ENCODE measurements at regions of chr5 and their contacts with region 1.

Region 1: GRCh38 chr5:132205385-132206125 is 22.1 kb downstream of the P4HA2 start:
- DNase-seq: no peak
- ATAC-seq: peak; percentile 69
- H3K4me3 ChIP-seq: no peak overlapping the region
- H3K27ac ChIP-seq: no peak overlapping the region
- H3K4me1 ChIP-seq: peaks cover 6% of the 10 kb centered on the region
- H3K27me3 ChIP-seq: no peaks in the 10 kb centered on the region
- CTCF ChIP-seq: no peak
- EP300 ChIP-seq: no peak
- POLR2A ChIP-seq: no peak
- RAD21 ChIP-seq: no peak

Region 2: DNA sequence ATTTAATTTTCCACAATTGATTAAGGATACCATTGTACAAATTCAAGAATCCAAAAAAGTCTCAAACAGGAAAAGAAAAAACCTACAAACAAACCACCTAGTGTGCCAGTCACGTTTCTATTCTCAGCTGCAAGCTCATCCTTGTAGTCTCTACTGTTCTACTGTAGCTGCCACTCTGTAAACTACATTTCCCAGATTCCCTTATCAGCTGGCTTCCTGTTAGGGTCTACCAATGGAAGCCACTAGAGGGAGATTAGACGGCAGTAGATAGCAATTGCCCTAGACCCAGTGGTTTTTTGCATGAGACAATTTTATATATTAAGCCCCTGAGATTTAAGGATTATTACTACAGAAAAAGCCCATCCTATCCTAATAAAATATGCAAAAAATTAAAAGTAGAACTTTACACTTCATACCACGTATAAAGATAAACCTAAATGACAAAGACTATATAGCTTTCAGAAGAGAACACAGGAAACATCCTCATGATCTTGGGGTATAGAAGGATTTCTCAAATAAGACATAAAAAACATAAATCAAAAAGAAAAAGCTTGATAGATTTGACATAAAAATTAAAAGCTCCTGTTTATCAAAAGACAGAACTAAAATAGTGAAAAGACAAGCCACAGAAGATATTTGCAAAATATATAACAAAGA is 15.3 kb before region 1 on chr5:
- CTCF ChIA-PET with region 1: interaction called, 27 read pairs
- POLR2A ChIA-PET with region 1: interaction called, 13 read pairs
- RAD21 ChIA-PET with region 1: interaction called, 6 read pairs
- SMC1A ChIA-PET with region 1: interaction called, 22 read pairs
- in situ Hi-C with region 1: no loop called
- intact Hi-C with region 1: no loop called
- DNase-seq: no peak
- ATAC-seq: peak; percentile 100
- H3K4me3 ChIP-seq: no peak overlapping the region
- H3K27ac ChIP-seq: no peak overlapping the region
- H3K4me1 ChIP-seq: no peaks in the 10 kb centered on the region
- H3K27me3 ChIP-seq: no peaks in the 10 kb centered on the region
- CTCF ChIP-seq: peak; percentile 64 to 69 (median 65)
- EP300 ChIP-seq: no peak
- POLR2A ChIP-seq: no peak
- RAD21 ChIP-seq: peak; percentile 68

Region 3: GRCh38 chr5:132222649-132223038 is 17.1 kb after region 1 on chr5:
- CTCF ChIA-PET with region 1: interaction called, 10 read pairs
- POLR2A ChIA-PET with region 1: interaction called, 3 read pairs
- RAD21 ChIA-PET with region 1: interaction called, 3 read pairs
- SMC1A ChIA-PET with region 1: interaction called, 13 read pairs
- in situ Hi-C with region 1: no loop called
- intact Hi-C with region 1: no loop called
- DNase-seq: peak; percentile 38
- ATAC-seq: peak; percentile 75
- H3K4me3 ChIP-seq: no peak overlapping the region
- H3K27ac ChIP-seq: no peak overlapping the region
- H3K4me1 ChIP-seq: peaks cover 3% of the 10 kb centered on the region
- H3K27me3 ChIP-seq: peaks cover 0 to 5% of the 10 kb centered on the region in 2 experiments; a peak in 2 of 4 replicates
- CTCF ChIP-seq: no peak
- EP300 ChIP-seq: peak in 1 of 2 experiments; percentile 33; a peak in 1 of 4 replicates
- POLR2A ChIP-seq: no peak
- RAD21 ChIP-seq: no peak

Region 4: GRCh38 chr5:132227485-132228240 is 22.1 kb after region 1 on chr5 and contains the start of gene P4HA2:
- CTCF ChIA-PET with region 1: interaction called, 10 read pairs
- POLR2A ChIA-PET with region 1: interaction called, 3 read pairs
- RAD21 ChIA-PET with region 1: interaction called, 3 read pairs
- SMC1A ChIA-PET with region 1: interaction called, 7 read pairs
- in situ Hi-C with region 1: no loop called
- intact Hi-C with region 1: no loop called
- DNase-seq: no peak
- ATAC-seq: peak; percentile 96
- H3K4me3 ChIP-seq: peak within 1 kb of the TSS; percentile 75
- H3K27ac ChIP-seq: no peak within 1 kb of the TSS
- H3K4me1 ChIP-seq: peaks cover 10% of the 10 kb centered on the region
- H3K27me3 ChIP-seq: peaks cover 0 to 5% of the 10 kb centered on the region in 2 experiments; a peak in 2 of 4 replicates
- CTCF ChIP-seq: peak in 1 of 3 experiments; percentile 18; a peak in 1 of 6 replicates
- EP300 ChIP-seq: no peak
- POLR2A ChIP-seq: peak; percentile 68
- RAD21 ChIP-seq: no peak
- polyA plus RNA-seq, gene P4HA2: 9.1 to 10.6 TPM